PC-9 (cell line): ENCODE measurements at regions of chr3 and their contacts with region 1.

Region 1: DNA sequence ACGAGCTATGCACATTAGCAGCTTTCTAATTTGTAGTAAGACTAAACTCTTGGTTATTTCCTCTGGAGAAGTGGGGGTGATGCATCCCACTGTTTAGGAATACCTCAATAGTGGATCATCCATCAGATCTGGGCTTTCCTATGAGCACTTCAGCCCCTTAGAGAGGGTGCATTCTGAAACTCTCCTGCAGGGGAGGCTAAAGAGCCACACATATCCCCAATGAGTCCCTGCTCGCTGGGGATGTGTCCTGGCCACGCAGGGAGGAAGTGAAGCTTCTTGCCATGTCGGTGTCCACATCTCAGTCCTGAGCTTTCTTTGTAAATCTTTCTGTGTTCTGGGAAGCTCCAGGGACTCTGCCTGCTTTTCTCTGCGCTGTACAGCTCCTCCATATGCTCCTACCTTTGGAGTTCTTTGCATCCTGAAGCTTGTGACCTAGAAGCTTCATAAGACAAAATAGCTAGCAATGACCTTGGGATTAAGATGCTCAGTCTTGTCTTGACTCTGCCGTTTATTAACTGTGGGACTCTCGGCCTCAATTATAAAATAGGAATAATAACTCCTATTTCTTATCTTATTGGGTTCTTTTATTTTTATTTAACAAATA is 28.3 kb upstream of the MASP1 start:
- DNase-seq: peak; percentile 64 to 72
- H3K4me3 ChIP-seq: no peak overlapping the region
- H3K27ac ChIP-seq: no peak overlapping the region
- H3K4me1 ChIP-seq: no peaks in the 10 kb centered on the region
- H3K27me3 ChIP-seq: peaks cover 41% of the 10 kb centered on the region
- CTCF ChIP-seq: peak; percentile 85

Region 2: DNA sequence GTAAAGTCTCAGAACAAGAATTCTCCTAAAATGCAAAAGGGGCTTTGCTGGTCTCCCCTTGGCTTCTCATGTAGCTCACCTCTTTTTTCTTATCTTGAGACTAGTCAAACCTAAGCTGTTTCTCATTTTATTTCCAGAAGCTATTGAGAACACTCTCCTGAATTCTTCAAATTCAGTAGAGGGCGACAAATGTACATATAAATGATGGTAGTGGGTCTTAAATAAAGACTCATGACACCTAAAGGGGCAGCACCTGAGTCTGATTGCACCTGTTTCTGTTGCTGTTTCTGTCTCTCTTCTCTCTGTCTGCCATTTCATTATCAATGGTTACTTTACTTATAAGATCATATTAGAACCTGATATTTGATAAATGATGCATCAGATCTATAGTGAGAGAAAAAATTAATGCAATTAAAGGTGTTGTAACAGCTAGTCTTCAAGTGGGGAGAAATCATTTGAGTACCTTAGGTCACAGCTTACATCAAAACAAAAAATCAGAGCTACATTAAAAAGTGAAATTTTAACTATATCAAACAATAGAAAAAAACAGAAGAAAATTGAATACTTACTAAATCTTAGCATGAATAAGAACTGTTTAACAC is 470.3 kb before region 1 on chr3:
- CTCF ChIA-PET with region 1: interaction called, 4 read pairs
- POLR2A ChIA-PET with region 1: interaction called, 5 read pairs
- intact Hi-C with region 1: loop called (anchors 1 kb)
- DNase-seq: peak in 1 of 2 experiments; percentile 52
- H3K4me3 ChIP-seq: no peak overlapping the region
- H3K27ac ChIP-seq: no peak overlapping the region
- H3K4me1 ChIP-seq: no peaks in the 10 kb centered on the region
- H3K27me3 ChIP-seq: 0 out of 2 replicates have a peak, but pooled peaks cover 7% of the 10 kb centered on the region
- CTCF ChIP-seq: peak; percentile 81

Region 3: GRCh38 chr3:187572441-187572840 is 252.6 kb after region 1 on chr3:
- CTCF ChIA-PET with region 1: no interaction called
- POLR2A ChIA-PET with region 1: no interaction called
- intact Hi-C with region 1: loop called (anchors 5 kb)
- DNase-seq: no peak
- H3K4me3 ChIP-seq: no peak overlapping the region
- H3K27ac ChIP-seq: no peak overlapping the region
- H3K4me1 ChIP-seq: no peaks in the 10 kb centered on the region
- H3K27me3 ChIP-seq: no peaks in the 10 kb centered on the region; the same call in 1 of the 2 replicates
- CTCF ChIP-seq: no peak

Region 4: GRCh38 chr3:187616307-187616972 is 296.6 kb after region 1 on chr3:
- CTCF ChIA-PET with region 1: interaction called, 4 read pairs
- POLR2A ChIA-PET with region 1: no interaction called
- intact Hi-C with region 1: loop called (anchors 5 kb)
- DNase-seq: peak in 1 of 2 experiments; percentile 16
- H3K4me3 ChIP-seq: no peak overlapping the region
- H3K27ac ChIP-seq: no peak overlapping the region
- H3K4me1 ChIP-seq: no peaks in the 10 kb centered on the region
- H3K27me3 ChIP-seq: peaks cover 15% of the 10 kb centered on the region; the same call in 1 of the 2 replicates
- CTCF ChIP-seq: peak; percentile 89

Region 5: GRCh38 chr3:187714404-187714979 is 394.7 kb after region 1 on chr3:
- CTCF ChIA-PET with region 1: interaction called, 4 read pairs
- POLR2A ChIA-PET with region 1: no interaction called
- intact Hi-C with region 1: loop called (anchors 1 kb)
- DNase-seq: peak; percentile 74 to 82
- H3K4me3 ChIP-seq: no peak overlapping the region
- H3K27ac ChIP-seq: no peak overlapping the region
- H3K4me1 ChIP-seq: no peaks in the 10 kb centered on the region
- H3K27me3 ChIP-seq: no peaks in the 10 kb centered on the region
- CTCF ChIP-seq: peak; percentile 99